ENCODE measurements at regions of chr7 and their contacts with region 1.

Region 1: DNA sequence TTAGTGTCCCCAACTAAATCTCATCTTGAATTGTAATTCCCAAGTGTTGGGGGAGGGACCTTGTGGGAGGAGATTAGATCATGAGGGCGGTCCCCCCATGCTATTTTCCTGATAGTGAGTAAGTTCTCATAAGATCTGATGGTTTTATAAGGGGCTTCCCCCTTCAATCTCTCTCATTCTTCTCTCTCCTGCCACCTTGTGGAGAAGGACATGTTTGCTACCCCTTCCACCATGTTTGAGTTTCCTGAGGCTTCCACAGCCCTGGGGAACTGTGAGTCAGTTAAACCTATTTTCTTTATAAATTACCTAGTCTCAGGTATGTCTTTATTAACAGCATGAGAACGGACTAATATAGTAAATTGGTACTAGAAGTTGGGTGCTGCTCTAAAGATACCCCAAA is 365.6 kb downstream of the ANKRD7 start:
- DNase-seq: peak; percentile 22
- H3K4me3 Mint-ChIP-seq: no peak overlapping the region
- H3K27ac Mint-ChIP-seq: no peak overlapping the region
- H3K4me1 Mint-ChIP-seq: no peaks in the 10 kb centered on the region
- H3K27me3 Mint-ChIP-seq: no peaks in the 10 kb centered on the region

Region 2: GRCh38 chr7:118259115-118259514 is 331.0 kb before region 1 on chr7:
- CTCF ChIA-PET with region 1: no interaction called
- intact Hi-C with region 1: loop called (anchors 2 kb)
- DNase-seq: no peak
- H3K4me3 Mint-ChIP-seq: no peak overlapping the region
- H3K27ac Mint-ChIP-seq: no peak overlapping the region
- H3K4me1 Mint-ChIP-seq: no peaks in the 10 kb centered on the region
- H3K27me3 Mint-ChIP-seq: peaks cover 4% of the 10 kb centered on the region